Activated naive CD4-positive, alpha-beta T cell treated with anti-CD3 and anti-CD28 coated beads, Interleukin-2, amount 10 ng/mL, durations not matched to agents 7 days and 5 days (primary cell): ENCODE measurements at regions of chr9 and their contacts with region 1.

Region 1: DNA sequence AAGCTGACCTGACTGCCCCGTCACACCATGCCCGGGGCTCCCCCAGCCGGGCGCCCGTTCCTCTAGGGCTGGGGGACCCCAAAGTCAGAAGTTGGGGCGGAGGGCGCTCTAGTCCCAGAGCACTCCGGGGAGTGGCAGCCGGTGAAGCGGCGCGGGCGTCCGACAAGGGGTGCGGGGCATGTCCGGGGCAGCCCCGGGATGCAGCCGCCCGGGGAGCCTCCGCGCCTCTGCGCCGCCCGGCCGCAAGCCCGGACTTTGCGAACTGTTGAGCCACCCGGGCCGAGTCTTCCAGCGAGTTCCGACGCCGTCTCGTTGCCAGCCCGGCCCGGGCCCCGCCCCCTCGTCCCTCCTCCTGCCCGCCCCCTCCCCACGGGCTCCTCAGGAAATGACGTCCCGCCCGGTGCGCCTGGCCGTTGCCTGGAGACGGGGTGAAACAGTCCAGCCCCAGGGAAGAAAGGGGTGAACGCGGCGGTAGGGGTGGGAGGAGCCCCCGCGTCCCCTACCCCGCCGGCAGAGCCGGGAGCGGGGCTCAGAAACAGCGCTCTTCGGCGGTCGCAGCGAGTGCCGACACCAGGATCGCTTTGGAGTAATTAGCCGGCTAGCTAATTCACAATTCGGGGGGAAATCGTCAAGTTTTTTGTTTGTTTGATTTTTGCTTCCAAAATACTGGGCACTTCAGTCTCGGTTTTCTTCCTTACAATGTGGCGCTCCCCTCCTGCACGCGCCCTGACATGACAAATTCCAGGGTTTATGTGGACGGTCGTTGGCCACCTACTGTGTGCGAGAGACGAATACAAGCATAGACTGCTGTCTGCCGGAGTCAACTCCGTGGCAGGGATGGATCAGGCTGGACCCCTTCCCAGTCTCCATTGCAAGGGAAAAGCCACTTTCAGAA is at the start of gene WHRN:
- DNase-seq: peak; percentile 94
- H3K4me3 Mint-ChIP-seq: peak within 1 kb of the TSS; percentile 75
- H3K27ac Mint-ChIP-seq: peak within 1 kb of the TSS; percentile 24
- H3K4me1 Mint-ChIP-seq: peaks cover 13% of the 10 kb centered on the region
- H3K27me3 Mint-ChIP-seq: peaks cover 97% of the 10 kb centered on the region

Region 2: DNA sequence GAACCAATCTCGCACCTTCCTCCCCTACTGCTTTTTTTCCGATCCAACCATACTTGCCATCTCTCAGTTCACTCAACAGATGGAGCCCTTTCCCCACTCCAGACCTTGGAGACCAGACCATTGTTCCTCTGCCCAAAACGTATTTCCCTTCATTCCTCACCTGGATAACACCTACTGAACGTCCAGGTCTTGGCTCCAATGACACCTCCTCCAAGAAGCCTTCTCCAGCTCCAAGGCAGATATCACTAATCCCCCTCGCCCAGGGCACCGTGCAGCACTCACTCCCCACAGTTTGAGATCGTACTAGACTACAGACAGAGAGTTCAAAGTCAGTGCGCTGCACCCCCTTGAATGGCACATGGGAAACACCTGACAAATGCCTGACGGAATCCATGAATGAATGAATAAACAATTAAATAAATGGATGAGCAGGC is 70.5 kb before region 1 on chr9:
- CTCF ChIA-PET with region 1: interaction called, 34 read pairs
- DNase-seq: peak; percentile 30
- H3K4me3 Mint-ChIP-seq: no peak overlapping the region
- H3K27ac Mint-ChIP-seq: no peak overlapping the region
- H3K4me1 Mint-ChIP-seq: peaks cover 4% of the 10 kb centered on the region
- H3K27me3 Mint-ChIP-seq: peaks cover 7% of the 10 kb centered on the region

Region 3: GRCh38 chr9:114487607-114488300 is 17.7 kb before region 1 on chr9:
- CTCF ChIA-PET with region 1: interaction called, 62 read pairs
- DNase-seq: peak; percentile 68
- H3K4me3 Mint-ChIP-seq: no peak overlapping the region
- H3K27ac Mint-ChIP-seq: no peak overlapping the region
- H3K4me1 Mint-ChIP-seq: peaks cover 26% of the 10 kb centered on the region
- H3K27me3 Mint-ChIP-seq: peaks cover 13% of the 10 kb centered on the region

Region 4: GRCh38 chr9:114911167-114911821 is 405.9 kb after region 1 on chr9:
- CTCF ChIA-PET with region 1: no interaction called
- DNase-seq: no peak
- H3K4me3 Mint-ChIP-seq: no peak overlapping the region
- H3K27ac Mint-ChIP-seq: peak overlapping the region; percentile 97
- H3K4me1 Mint-ChIP-seq: peaks cover 97% of the 10 kb centered on the region
- H3K27me3 Mint-ChIP-seq: no peaks in the 10 kb centered on the region